ENCODE measurements at regions of chr4 and their contacts with region 1.

Region 1: DNA sequence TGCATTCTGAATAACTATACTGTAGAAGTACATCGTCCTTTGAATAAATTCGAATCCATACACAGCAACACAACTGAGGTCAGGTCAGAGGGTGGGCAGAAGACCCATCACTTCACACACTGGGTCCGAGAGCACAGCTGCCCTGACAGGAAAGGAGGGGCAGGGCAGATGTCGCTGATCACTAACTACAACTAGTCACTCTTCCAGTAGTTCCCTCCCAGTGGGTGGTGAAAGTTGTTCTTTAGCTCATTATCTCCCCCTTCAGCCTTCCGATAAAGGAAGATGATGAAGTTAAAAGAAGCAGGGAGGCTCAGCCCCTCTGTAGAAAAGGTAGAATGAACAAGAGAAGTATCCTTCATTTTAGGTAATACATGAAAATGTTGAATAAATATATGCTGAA is 278.9 kb downstream of the INPP4B start:
- DNase-seq: peak in 34 of 35 experiments; percentile 8 to 80 (median 29)
- ATAC-seq: peak; percentile 73 to 79 (median 77)
- H3K4me3 ChIP-seq: peak overlapping the region in 1 of 2 donors; percentile 51
- H3K4me3 Mint-ChIP-seq: peak overlapping the region; percentile 82 to 90 (median 86)
- H3K27ac ChIP-seq: peak overlapping the region; percentile 80
- H3K27ac Mint-ChIP-seq: peak overlapping the region; percentile 95 to 96
- H3K4me1 ChIP-seq: peaks cover 3 to 6% of the 10 kb centered on the region in 2 experiments
- H3K4me1 Mint-ChIP-seq: peaks cover 65 to 78% (median 73%) of the 10 kb centered on the region in 3 donors
- H3K27me3 ChIP-seq: no peaks in the 10 kb centered on the region
- H3K27me3 Mint-ChIP-seq: no peaks in the 10 kb centered on the region

Region 2: DNA sequence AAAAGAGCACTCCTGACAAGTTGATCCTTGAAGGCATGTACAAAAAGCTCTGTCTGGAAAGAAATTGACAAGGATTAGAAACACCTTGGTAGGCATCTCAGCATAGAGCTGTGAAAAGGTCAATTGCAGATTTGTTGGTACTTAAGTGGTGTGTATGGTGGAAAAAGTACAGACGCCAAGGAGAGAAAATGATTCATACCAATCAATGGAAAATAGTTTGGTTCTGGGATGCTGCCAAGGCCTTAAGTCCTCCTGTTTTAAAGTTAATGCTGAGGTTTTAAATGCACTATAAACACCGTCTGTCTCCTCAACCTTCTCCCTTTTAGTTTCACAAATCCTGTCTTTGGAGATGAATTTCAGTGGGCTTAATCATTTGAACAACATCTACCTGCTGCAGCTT is 406.7 kb before region 1 on chr4:
- CTCF ChIA-PET with region 1: no interaction called
- POLR2A ChIA-PET with region 1: no interaction called
- DNase-seq: no peak
- ATAC-seq: no peak
- H3K4me3 ChIP-seq: no peak overlapping the region
- H3K4me3 Mint-ChIP-seq: no peak overlapping the region
- H3K27ac ChIP-seq: no peak overlapping the region
- H3K27ac Mint-ChIP-seq: peak overlapping the region in 1 of 2 donors; percentile 39
- H3K4me1 ChIP-seq: no peaks in the 10 kb centered on the region
- H3K4me1 Mint-ChIP-seq: peaks cover 14 to 30% (median 15%) of the 10 kb centered on the region in 3 donors
- H3K27me3 ChIP-seq: no peaks in the 10 kb centered on the region
- H3K27me3 Mint-ChIP-seq: no peaks in the 10 kb centered on the region

Region 3: DNA sequence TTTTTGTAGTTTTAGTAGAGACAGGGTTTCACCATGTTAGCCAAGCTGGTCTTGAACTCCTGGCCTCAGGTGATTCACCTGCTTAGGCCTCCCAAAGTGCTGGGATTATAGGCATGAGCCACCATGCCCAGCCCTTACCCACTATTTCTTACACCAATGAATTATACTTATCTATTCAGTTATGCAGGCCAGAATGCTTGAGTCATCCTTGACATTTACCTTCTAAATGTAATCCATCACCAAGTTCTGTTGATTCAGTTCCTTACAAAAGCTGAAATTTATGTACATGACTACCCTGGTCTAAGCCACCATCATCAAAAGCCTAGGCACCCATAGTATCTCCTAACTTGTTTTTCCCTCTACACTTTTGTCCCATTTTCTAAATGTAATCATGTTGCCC is 345.1 kb before region 1 on chr4:
- CTCF ChIA-PET with region 1: interaction called in 1 of 2 experiments, 13 read pairs
- POLR2A ChIA-PET with region 1: no interaction called
- DNase-seq: no peak
- ATAC-seq: no peak
- H3K4me3 ChIP-seq: no peak overlapping the region
- H3K4me3 Mint-ChIP-seq: no peak overlapping the region
- H3K27ac ChIP-seq: no peak overlapping the region
- H3K27ac Mint-ChIP-seq: no peak overlapping the region
- H3K4me1 ChIP-seq: no peaks in the 10 kb centered on the region
- H3K4me1 Mint-ChIP-seq: peaks cover 23 to 40% (median 33%) of the 10 kb centered on the region in 3 donors
- H3K27me3 ChIP-seq: no peaks in the 10 kb centered on the region
- H3K27me3 Mint-ChIP-seq: no peaks in the 10 kb centered on the region

Region 4: GRCh38 chr4:142405021-142405694 is 162.0 kb before region 1 on chr4:
- CTCF ChIA-PET with region 1: interaction called in 1 of 2 experiments, 11 read pairs
- POLR2A ChIA-PET with region 1: interaction called, 4 to 5 read pairs
- DNase-seq: peak; percentile 5 to 75 (median 34)
- ATAC-seq: peak; percentile 39 to 66 (median 57)
- H3K4me3 ChIP-seq: peak overlapping the region; percentile 56 to 81
- H3K4me3 Mint-ChIP-seq: peak overlapping the region; percentile 84 to 94 (median 94)
- H3K27ac ChIP-seq: peak overlapping the region; percentile 83
- H3K27ac Mint-ChIP-seq: peak overlapping the region; percentile 98 to 99
- H3K4me1 ChIP-seq: peaks cover 34 to 41% of the 10 kb centered on the region in 2 experiments
- H3K4me1 Mint-ChIP-seq: peaks cover 64 to 74% (median 68%) of the 10 kb centered on the region in 3 donors
- H3K27me3 ChIP-seq: no peaks in the 10 kb centered on the region
- H3K27me3 Mint-ChIP-seq: no peaks in the 10 kb centered on the region

Region 5: DNA sequence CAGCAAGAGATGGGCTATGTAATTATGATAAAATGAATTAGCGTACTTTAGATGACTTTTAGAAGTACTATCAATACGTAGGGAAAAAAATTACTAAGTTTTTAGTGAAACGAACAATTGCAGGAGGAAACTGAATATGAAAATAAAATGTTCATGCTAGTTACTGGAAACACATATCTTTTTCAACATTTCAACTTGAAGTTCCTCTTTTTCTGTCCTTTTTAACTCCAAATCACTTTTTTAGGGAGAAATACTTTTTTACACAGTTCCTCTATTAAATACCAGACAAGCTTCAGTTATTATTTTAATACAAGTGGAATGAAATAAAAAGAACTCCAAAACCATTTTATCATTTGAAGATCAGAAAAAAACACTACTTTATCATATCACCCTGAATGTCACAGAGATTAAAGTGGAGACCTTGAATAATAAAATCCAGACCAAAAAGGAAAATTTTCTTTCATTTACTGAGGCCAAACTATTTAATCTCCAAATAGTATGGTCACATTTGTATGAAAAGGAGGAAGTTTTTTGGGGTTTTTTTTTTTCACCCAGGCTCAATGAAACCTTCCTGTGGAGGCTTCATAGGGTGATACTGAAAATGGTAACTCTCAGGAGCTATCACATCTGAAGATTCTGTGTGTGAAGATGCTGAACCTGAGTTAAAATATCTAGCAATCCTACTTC is 27.3 kb before region 1 on chr4:
- CTCF ChIA-PET with region 1: no interaction called
- POLR2A ChIA-PET with region 1: no interaction called
- DNase-seq: no peak
- ATAC-seq: no peak
- H3K4me3 ChIP-seq: no peak overlapping the region
- H3K4me3 Mint-ChIP-seq: no peak overlapping the region
- H3K27ac ChIP-seq: no peak overlapping the region
- H3K27ac Mint-ChIP-seq: no peak overlapping the region
- H3K4me1 ChIP-seq: peaks cover 0 to 4% of the 10 kb centered on the region in 2 experiments
- H3K4me1 Mint-ChIP-seq: peaks cover 16 to 35% (median 23%) of the 10 kb centered on the region in 3 donors
- H3K27me3 ChIP-seq: no peaks in the 10 kb centered on the region
- H3K27me3 Mint-ChIP-seq: no peaks in the 10 kb centered on the region

Region 6: DNA sequence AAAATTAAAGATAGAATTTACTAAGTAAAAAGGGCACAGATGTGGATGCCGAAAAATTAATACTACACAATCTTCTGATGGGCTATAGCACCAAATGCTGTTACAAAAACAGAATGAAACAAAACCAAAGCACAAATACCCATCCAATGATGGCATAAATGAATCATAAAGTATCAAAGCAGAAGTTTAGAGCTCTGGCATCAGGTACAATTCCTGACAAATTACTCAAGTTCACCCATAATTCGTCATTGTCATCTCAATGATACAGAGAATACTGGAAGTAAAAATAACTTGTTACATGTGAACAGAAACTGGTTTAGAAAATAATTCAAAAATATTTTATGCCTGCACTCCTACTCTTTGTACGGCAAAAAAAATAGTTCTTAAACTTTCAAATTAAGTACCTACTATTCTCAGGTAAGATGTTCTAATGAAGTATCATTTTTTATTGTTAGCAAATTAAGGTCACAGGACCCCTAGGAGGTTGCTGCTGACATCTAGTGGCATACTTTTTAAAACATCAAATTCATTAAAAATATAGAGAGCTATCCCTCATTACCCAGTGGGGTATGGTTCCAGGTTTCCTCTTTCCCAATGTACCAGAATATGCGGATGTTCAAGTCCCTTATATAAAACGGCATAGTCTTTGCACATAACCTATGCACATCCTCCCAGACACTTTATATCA is 152.8 kb after region 1 on chr4:
- CTCF ChIA-PET with region 1: interaction called, 3 to 10 read pairs
- POLR2A ChIA-PET with region 1: no interaction called
- DNase-seq: peak in 2 of 35 experiments; percentile 3 to 65
- ATAC-seq: peak; percentile 62 to 79 (median 72)
- H3K4me3 ChIP-seq: no peak overlapping the region
- H3K4me3 Mint-ChIP-seq: no peak overlapping the region
- H3K27ac ChIP-seq: no peak overlapping the region
- H3K27ac Mint-ChIP-seq: peak overlapping the region; percentile 58 to 73
- H3K4me1 ChIP-seq: peaks cover 0 to 5% of the 10 kb centered on the region in 2 experiments
- H3K4me1 Mint-ChIP-seq: peaks cover 20 to 39% (median 37%) of the 10 kb centered on the region in 3 donors
- H3K27me3 ChIP-seq: no peaks in the 10 kb centered on the region
- H3K27me3 Mint-ChIP-seq: no peaks in the 10 kb centered on the region

Measured in T-cell (primary cell).